Panc1 (cell line): ENCODE measurements at regions of chr10 and their contacts with region 1.

Region 1: GRCh38 chr10:63521416-63522276 is 445 bp downstream of the REEP3 start:
- DNase-seq: no peak
- ATAC-seq: peak; percentile 86
- H3K4me3 ChIP-seq: peak overlapping the region; percentile 71 to 83
- H3K27ac ChIP-seq: peak overlapping the region; percentile 94
- H3K4me1 ChIP-seq: peaks cover 66% of the 10 kb centered on the region
- H3K27me3 ChIP-seq: no peaks in the 10 kb centered on the region
- CTCF ChIP-seq: no peak; the same call in 1 of the 2 replicates

Region 2: GRCh38 chr10:63348227-63348850 is 173.3 kb before region 1 on chr10:
- CTCF ChIA-PET with region 1: no interaction called
- POLR2A ChIA-PET with region 1: interaction called, 15 read pairs
- in situ Hi-C with region 1: no loop called
- intact Hi-C with region 1: no loop called
- DNase-seq: no peak
- ATAC-seq: no peak
- H3K4me3 ChIP-seq: no peak overlapping the region
- H3K27ac ChIP-seq: no peak overlapping the region
- H3K4me1 ChIP-seq: no peaks in the 10 kb centered on the region
- H3K27me3 ChIP-seq: no peaks in the 10 kb centered on the region
- CTCF ChIP-seq: no peak

Region 3: DNA sequence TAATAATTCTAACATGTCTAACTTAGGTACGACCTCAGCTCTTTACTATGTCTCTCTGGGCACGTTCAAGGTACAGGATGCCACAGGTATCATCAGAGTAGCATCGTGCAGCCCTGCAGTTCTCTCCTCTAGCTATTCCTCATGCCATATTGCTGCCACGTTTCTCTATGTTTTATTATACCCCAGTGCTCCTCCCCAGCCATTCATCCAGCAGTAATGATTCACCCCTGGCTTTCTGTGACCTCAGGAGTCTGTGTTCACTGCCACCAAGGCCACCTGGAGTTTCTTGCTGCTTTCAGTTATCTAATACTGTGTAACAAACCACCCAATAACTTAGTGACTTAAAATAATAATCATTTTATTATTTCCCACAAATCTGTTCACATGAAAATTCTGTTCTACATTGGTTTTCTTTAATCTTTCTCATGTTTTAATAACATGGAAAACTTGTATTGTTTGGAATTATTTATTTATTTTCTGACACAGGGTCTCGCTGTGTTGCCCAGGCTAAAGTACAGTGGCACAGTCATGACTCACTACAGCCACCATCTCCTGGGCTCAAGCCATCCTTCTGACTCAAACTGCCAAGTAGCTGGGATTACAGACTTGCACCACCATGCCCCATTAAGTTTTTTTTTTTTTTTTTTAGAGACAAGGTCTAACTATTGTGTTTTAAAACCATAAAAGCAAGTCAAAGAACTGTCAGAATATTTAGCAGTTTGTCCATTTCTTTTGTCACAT is 21.4 kb after region 1 on chr10:
- CTCF ChIA-PET with region 1: no interaction called
- POLR2A ChIA-PET with region 1: interaction called, 10 read pairs
- in situ Hi-C with region 1: no loop called
- intact Hi-C with region 1: no loop called
- DNase-seq: no peak
- ATAC-seq: peak; percentile 83
- H3K4me3 ChIP-seq: no peak overlapping the region
- H3K27ac ChIP-seq: peak overlapping the region; percentile 19; the same call in 1 of the 2 replicates
- H3K4me1 ChIP-seq: peaks cover 19% of the 10 kb centered on the region
- H3K27me3 ChIP-seq: no peaks in the 10 kb centered on the region
- CTCF ChIP-seq: no peak

Region 4: DNA sequence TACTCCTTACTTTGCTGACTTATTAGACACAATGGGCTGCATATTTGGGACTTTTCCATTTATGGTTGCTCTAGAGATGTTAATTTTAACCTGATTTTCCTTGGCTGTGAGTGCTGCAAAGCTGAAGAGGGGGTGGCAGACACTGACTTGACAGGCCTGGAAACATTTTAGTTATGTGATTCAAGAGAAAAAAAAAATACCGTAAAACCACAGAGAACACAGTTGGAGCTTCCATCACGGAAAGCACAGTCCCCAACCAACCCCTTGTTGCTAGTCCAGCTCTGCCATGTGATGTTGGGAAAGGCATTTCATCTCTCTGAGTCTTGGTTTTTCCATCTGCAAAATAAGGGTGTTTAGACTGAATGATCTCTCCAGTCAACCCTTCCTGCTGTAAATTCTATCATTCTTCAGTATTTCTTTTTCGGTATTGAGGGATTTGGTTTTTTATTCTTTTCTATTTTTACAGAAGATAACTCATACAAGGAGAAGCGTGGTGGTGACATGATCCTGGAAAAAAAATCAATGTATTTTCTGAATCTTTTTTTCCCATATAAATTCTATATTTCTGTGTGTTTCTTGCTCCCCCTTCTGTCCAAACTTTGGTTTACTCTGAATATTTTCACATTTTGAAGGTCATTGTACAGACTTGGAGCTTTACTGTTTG is 245.6 kb after region 1 on chr10:
- CTCF ChIA-PET with region 1: no interaction called
- POLR2A ChIA-PET with region 1: interaction called, 17 read pairs
- in situ Hi-C with region 1: no loop called
- intact Hi-C with region 1: no loop called
- DNase-seq: no peak
- ATAC-seq: no peak
- H3K4me3 ChIP-seq: no peak overlapping the region
- H3K27ac ChIP-seq: no peak overlapping the region
- H3K4me1 ChIP-seq: no peaks in the 10 kb centered on the region
- H3K27me3 ChIP-seq: no peaks in the 10 kb centered on the region
- CTCF ChIP-seq: peak; percentile 65; the same call in 1 of the 2 replicates